ENCODE measurements at regions of chr9 and their contacts with region 1.

Region 1: GRCh38 chr9:137757613-137758029 is 120.0 kb upstream of the CACNA1B start:
- DNase-seq: peak; percentile 69
- ATAC-seq: peak; percentile 62
- H3K4me3 ChIP-seq: peak overlapping the region; percentile 31; the same call in 1 of the 2 replicates
- H3K27ac ChIP-seq: peak overlapping the region; percentile 96
- H3K4me1 ChIP-seq: peaks cover 58% of the 10 kb centered on the region
- H3K27me3 ChIP-seq: no peaks in the 10 kb centered on the region
- CTCF ChIP-seq: no peak
- EP300 ChIP-seq: peak; percentile 67 to 87; a peak in 3 of 4 replicates
- POLR2A ChIP-seq: no peak
- RAD21 ChIP-seq: no peak

Region 2: GRCh38 chr9:137740312-137740711 is 17.3 kb before region 1 on chr9:
- CTCF ChIA-PET with region 1: interaction called, 23 read pairs
- POLR2A ChIA-PET with region 1: interaction called, 59 read pairs
- RAD21 ChIA-PET with region 1: interaction called, 65 read pairs
- SMC1A ChIA-PET with region 1: interaction called, 42 read pairs
- in situ Hi-C with region 1: no loop called
- intact Hi-C with region 1: loop called (anchors 1 kb)
- DNase-seq: no peak
- ATAC-seq: no peak
- H3K4me3 ChIP-seq: no peak overlapping the region
- H3K27ac ChIP-seq: no peak overlapping the region
- H3K4me1 ChIP-seq: peaks cover 48% of the 10 kb centered on the region
- H3K27me3 ChIP-seq: no peaks in the 10 kb centered on the region
- CTCF ChIP-seq: no peak
- EP300 ChIP-seq: no peak
- POLR2A ChIP-seq: no peak
- RAD21 ChIP-seq: no peak

Region 3: DNA sequence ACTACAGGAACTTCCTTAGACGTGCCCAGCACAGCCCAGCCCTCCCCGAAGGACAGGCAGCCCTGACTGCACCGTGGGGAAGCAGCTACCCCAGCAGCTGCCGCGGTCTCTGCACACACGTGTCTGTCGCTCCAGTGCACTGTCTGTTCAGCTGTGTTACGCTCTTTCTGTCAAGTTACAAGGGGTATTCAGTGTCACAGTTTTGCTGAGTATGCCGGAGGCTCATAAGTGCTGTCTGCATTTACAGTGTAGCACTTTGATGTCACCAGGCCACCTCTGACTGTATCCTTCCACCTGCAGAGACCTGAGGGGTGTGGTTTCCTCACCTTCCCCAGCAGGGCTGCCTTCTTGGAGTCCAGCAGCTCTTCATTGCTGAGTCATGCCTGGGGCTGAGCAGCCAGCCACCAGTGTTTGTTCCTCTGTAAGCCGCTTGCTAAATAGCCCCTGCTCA is 12.1 kb before region 1 on chr9:
- CTCF ChIA-PET with region 1: interaction called, 23 read pairs
- POLR2A ChIA-PET with region 1: interaction called, 59 read pairs
- RAD21 ChIA-PET with region 1: interaction called, 65 read pairs
- SMC1A ChIA-PET with region 1: interaction called, 42 read pairs
- in situ Hi-C with region 1: no loop called
- intact Hi-C with region 1: loop called (anchors 1 kb)
- DNase-seq: peak; percentile 77
- ATAC-seq: peak; percentile 83
- H3K4me3 ChIP-seq: peak overlapping the region; percentile 16; the same call in 1 of the 2 replicates
- H3K27ac ChIP-seq: peak overlapping the region; percentile 77
- H3K4me1 ChIP-seq: peaks cover 50% of the 10 kb centered on the region
- H3K27me3 ChIP-seq: no peaks in the 10 kb centered on the region
- CTCF ChIP-seq: no peak
- EP300 ChIP-seq: peak; percentile 24 to 43; a peak in 1 of 4 replicates
- POLR2A ChIP-seq: peak; percentile 70
- RAD21 ChIP-seq: no peak